HepG2 (cell line): ENCODE measurements at regions of chr15 and their contacts with region 1.

Region 1: GRCh38 chr15:81792729-81793242 is 253.0 kb downstream of the MEX3B start:
- DNase-seq: no peak
- ATAC-seq: no peak
- H3K4me3 ChIP-seq: no peak overlapping the region
- H3K27ac ChIP-seq: no peak overlapping the region
- H3K4me1 ChIP-seq: no peaks in the 10 kb centered on the region
- H3K27me3 ChIP-seq: no peaks in the 10 kb centered on the region
- CTCF ChIP-seq: no peak
- EP300 ChIP-seq: no peak
- POLR2A ChIP-seq: no peak
- RAD21 ChIP-seq: no peak

Region 2: DNA sequence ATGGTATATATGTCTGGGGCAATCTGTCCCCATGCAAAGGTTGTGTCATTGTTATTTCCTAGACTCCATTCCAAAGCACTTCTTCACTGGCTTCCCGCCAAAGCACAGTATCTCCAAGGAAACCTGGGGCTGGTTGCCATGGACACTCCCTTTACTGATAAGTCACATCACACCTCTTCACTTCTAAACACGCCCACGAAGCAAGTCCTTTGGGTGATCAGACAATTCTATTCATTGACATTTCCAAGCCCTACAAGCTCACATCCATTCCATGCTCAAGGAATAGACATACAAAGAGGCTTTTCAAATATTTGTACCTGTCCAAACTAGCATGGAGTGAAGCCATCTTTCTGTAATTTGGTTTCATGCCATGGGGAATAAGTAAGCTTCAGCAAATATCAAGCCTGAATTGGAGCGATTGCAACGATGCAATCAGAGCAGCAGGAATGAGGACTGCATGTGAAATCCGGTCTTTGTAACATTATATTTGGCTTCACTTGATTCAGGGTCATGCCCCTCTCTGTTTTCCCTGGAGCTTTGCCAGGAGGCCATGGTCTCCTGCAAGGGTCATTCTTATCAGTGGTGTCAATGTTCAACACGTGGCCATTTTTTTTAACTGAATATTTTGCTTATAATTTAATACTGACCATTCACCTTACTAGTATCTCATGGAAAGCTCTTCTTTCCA is 217.2 kb before region 1 on chr15:
- CTCF ChIA-PET with region 1: no interaction called
- POLR2A ChIA-PET with region 1: no interaction called
- in situ Hi-C with region 1: no loop called
- intact Hi-C with region 1: loop called (anchors 5 kb)
- DNase-seq: no peak
- ATAC-seq: no peak
- H3K4me3 ChIP-seq: no peak overlapping the region
- H3K27ac ChIP-seq: no peak overlapping the region
- H3K4me1 ChIP-seq: no peaks in the 10 kb centered on the region
- H3K27me3 ChIP-seq: no peaks in the 10 kb centered on the region
- CTCF ChIP-seq: no peak
- EP300 ChIP-seq: no peak
- POLR2A ChIP-seq: no peak
- RAD21 ChIP-seq: no peak

Region 3: GRCh38 chr15:81728726-81729125 is 64.1 kb before region 1 on chr15:
- CTCF ChIA-PET with region 1: no interaction called
- POLR2A ChIA-PET with region 1: no interaction called
- in situ Hi-C with region 1: no loop called
- intact Hi-C with region 1: no loop called
- DNase-seq: no peak
- ATAC-seq: no peak
- H3K4me3 ChIP-seq: no peak overlapping the region
- H3K27ac ChIP-seq: no peak overlapping the region
- H3K4me1 ChIP-seq: no peaks in the 10 kb centered on the region
- H3K27me3 ChIP-seq: no peaks in the 10 kb centered on the region
- CTCF ChIP-seq: no peak
- EP300 ChIP-seq: no peak
- POLR2A ChIP-seq: no peak
- RAD21 ChIP-seq: no peak

Region 4: GRCh38 chr15:81852411-81853149 is 59.8 kb after region 1 on chr15:
- CTCF ChIA-PET with region 1: no interaction called
- POLR2A ChIA-PET with region 1: no interaction called
- in situ Hi-C with region 1: no loop called
- intact Hi-C with region 1: no loop called
- DNase-seq: no peak
- ATAC-seq: no peak
- H3K4me3 ChIP-seq: no peak overlapping the region
- H3K27ac ChIP-seq: no peak overlapping the region
- H3K4me1 ChIP-seq: no peaks in the 10 kb centered on the region
- H3K27me3 ChIP-seq: 0 out of 5 replicates have a peak, but pooled peaks cover 0 to 7% of the 10 kb centered on the region in 2 experiments
- CTCF ChIP-seq: no peak
- EP300 ChIP-seq: no peak
- POLR2A ChIP-seq: no peak
- RAD21 ChIP-seq: no peak